Left colon (tissue), 2 donors: ENCODE measurements at regions of chr2 and their contacts with region 1.

Region 1: GRCh38 chr2:151409601-151410484 is at the start of gene RIF1:
- DNase-seq: peak; percentile 90
- ATAC-seq: peak; percentile 98
- total RNA-seq, gene RIF1: 23.5 to 25.9 TPM

Region 2: GRCh38 chr2:151278487-151278886 is 131.4 kb before region 1 on chr2:
- intact Hi-C with region 1: no loop called
- DNase-seq: no peak
- ATAC-seq: no peak

Region 3: GRCh38 chr2:151289369-151290088 is 120.3 kb before region 1 on chr2 and contains the start of gene NMI:
- intact Hi-C with region 1: loop called in 1 of 2 experiments (anchors 5 kb)
- DNase-seq: peak; percentile 68 to 79
- ATAC-seq: peak; percentile 92
- total RNA-seq, gene NMI: 17.0 to 20.1 TPM